ENCODE measurements at regions of chr3 and their contacts with region 1.

Region 1: GRCh38 chr3:48548729-48549705 is 7.6 kb downstream of the PFKFB4 start:
- DNase-seq: peak; percentile 74 to 92 (median 90)
- H3K4me3 ChIP-seq: no peak overlapping the region
- H3K27ac ChIP-seq: peak overlapping the region in 42 of 59 donors; percentile 4 to 81 (median 65)
- H3K27me3 ChIP-seq: no peaks in the 10 kb centered on the region
- CTCF ChIP-seq: peak; percentile 73 to 99 (median 96)

Region 2: GRCh38 chr3:48273594-48274211 is 275.3 kb before region 1 on chr3:
- intact Hi-C with region 1: loop called in 1 of 2 experiments (anchors 10 kb)
- DNase-seq: peak in 6 of 10 donors; percentile 21 to 59 (median 50)
- H3K4me3 ChIP-seq: no peak overlapping the region
- H3K27ac ChIP-seq: no peak overlapping the region
- H3K27me3 ChIP-seq: no peaks in the 10 kb centered on the region
- CTCF ChIP-seq: peak; percentile 44 to 87 (median 75)

Region 3: GRCh38 chr3:48465531-48466378 is 83.3 kb before region 1 on chr3:
- intact Hi-C with region 1: loop called (anchors 1 kb)
- DNase-seq: peak; percentile 83 to 99 (median 96)
- H3K4me3 ChIP-seq: peak overlapping the region; percentile 47 to 83 (median 69)
- H3K27ac ChIP-seq: peak overlapping the region; percentile 93 to 100 (median 99)
- H3K27me3 ChIP-seq: no peaks in the 10 kb centered on the region
- CTCF ChIP-seq: peak; percentile 14 to 97 (median 92)

Measured in dorsolateral prefrontal cortex (tissue), 120 donors.